Activated B cell treated with CpG ODN at 0.5 μM for 24 hours (primary cell): ENCODE measurements at regions of chr10 and their contacts with region 1.

Region 1: DNA sequence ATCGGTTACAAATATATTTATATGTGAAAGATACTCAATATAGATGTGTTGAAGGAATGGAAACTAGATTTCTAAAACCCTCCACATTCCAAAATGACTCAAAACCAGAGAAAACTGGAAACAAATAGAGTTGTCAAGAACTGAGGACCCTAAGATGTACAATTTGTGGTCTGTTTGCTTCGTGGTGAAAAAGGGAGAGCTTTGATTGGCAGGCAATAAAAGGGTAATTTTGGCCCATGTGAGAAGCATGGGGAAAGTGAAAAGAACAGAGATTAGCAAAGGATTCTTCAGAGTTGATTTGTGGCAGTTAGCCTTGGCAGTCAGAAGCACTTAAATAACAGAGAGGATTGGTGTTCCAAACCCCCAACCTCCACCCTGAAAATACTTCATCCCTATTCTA is 37.1 kb upstream of the DKK1 start:
- DNase-seq: no peak
- ATAC-seq: no peak
- H3K4me3 Mint-ChIP-seq: no peak overlapping the region
- H3K27ac Mint-ChIP-seq: no peak overlapping the region
- H3K4me1 Mint-ChIP-seq: no peaks in the 10 kb centered on the region
- H3K27me3 Mint-ChIP-seq: no peaks in the 10 kb centered on the region
- CTCF ChIP-seq: no peak

Region 2: GRCh38 chr10:52226197-52226847 is 50.7 kb before region 1 on chr10:
- CTCF ChIA-PET with region 1: no interaction called
- POLR2A ChIA-PET with region 1: no interaction called
- intact Hi-C with region 1: loop called (anchors 1 kb)
- DNase-seq: no peak
- ATAC-seq: no peak
- H3K4me3 Mint-ChIP-seq: no peak overlapping the region
- H3K27ac Mint-ChIP-seq: no peak overlapping the region
- H3K4me1 Mint-ChIP-seq: peaks cover 7% of the 10 kb centered on the region
- H3K27me3 Mint-ChIP-seq: no peaks in the 10 kb centered on the region
- CTCF ChIP-seq: no peak

Region 3: DNA sequence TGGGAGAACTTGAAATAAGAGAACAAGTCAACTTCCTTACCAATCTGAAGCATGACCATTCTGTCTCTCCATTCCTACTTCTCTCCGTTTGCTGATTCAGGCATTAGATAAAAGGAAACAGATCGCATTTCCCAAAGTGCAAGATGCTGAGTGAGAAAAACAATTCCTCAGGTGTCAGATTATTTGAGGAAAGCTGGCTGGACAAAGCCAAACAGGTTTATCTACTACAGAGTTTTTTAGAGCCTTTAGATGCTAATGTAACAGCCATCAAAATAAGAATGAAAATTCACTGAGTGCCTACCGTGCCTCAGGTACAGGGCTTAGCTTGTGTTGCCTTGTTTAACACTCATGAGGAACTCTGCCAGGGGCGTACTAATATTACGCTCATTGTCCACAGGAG is 631.5 kb after region 1 on chr10:
- CTCF ChIA-PET with region 1: no interaction called
- POLR2A ChIA-PET with region 1: no interaction called
- intact Hi-C with region 1: no loop called
- DNase-seq: no peak
- ATAC-seq: no peak
- H3K4me3 Mint-ChIP-seq: no peak overlapping the region
- H3K27ac Mint-ChIP-seq: no peak overlapping the region
- H3K4me1 Mint-ChIP-seq: no peaks in the 10 kb centered on the region
- H3K27me3 Mint-ChIP-seq: no peaks in the 10 kb centered on the region
- CTCF ChIP-seq: no peak